HepG2 (cell line): ENCODE measurements at regions of chr1 and their contacts with region 1.

Region 1: DNA sequence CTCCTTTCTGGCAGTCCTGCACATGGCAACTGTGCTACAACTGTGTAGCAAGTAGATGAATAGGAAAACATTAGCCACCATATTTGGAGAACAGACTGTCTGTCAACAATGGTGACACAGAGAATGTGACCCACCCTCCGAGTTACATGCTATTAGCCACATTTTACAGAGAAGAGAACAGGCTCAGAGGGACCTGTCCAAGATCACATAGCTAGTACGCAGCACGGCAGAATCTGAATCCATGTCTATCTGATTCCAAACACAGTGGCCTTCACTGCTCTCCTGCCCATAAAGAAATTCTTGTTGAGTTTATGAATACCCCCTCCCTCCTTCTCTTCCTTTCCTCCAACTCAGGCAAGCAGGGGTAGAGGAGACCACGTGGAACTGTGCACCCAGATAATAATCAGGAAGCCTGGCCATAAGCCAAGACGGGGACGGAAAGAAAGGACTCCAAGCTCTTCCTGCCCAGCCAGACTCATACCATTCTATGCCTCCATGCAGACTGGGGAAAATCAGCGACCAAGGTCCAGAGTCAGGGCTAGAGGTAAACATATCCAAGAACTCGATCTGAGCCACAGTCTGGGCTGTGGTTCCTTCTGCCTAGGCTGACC is 78.8 kb downstream of the TRABD2B start:
- DNase-seq: peak; percentile 91
- ATAC-seq: peak; percentile 74
- H3K4me3 ChIP-seq: peak overlapping the region; percentile 15 to 65 (median 31); a peak in 5 of 6 replicates
- H3K27ac ChIP-seq: peak overlapping the region; percentile 85
- H3K4me1 ChIP-seq: peaks cover 100% of the 10 kb centered on the region
- H3K27me3 ChIP-seq: no peaks in the 10 kb centered on the region
- CTCF ChIP-seq: no peak
- EP300 ChIP-seq: no peak; a peak in 1 of 4 replicates
- POLR2A ChIP-seq: peak; percentile 27 to 49; a peak in 3 of 4 replicates
- RAD21 ChIP-seq: no peak

Region 2: GRCh38 chr1:47785561-47786271 is 132.6 kb before region 1 on chr1:
- CTCF ChIA-PET with region 1: no interaction called
- POLR2A ChIA-PET with region 1: interaction called, 11 read pairs
- in situ Hi-C with region 1: no loop called
- intact Hi-C with region 1: no loop called
- DNase-seq: peak; percentile 41
- ATAC-seq: peak; percentile 86
- H3K4me3 ChIP-seq: peak overlapping the region in 1 of 3 experiments; percentile 30; a peak in 2 of 6 replicates
- H3K27ac ChIP-seq: no peak overlapping the region
- H3K4me1 ChIP-seq: peaks cover 57% of the 10 kb centered on the region
- H3K27me3 ChIP-seq: peaks cover 0 to 1% of the 10 kb centered on the region in 2 experiments; a peak in 1 of 5 replicates
- CTCF ChIP-seq: peak; percentile 84
- EP300 ChIP-seq: no peak
- POLR2A ChIP-seq: no peak
- RAD21 ChIP-seq: peak; percentile 81

Region 3: DNA sequence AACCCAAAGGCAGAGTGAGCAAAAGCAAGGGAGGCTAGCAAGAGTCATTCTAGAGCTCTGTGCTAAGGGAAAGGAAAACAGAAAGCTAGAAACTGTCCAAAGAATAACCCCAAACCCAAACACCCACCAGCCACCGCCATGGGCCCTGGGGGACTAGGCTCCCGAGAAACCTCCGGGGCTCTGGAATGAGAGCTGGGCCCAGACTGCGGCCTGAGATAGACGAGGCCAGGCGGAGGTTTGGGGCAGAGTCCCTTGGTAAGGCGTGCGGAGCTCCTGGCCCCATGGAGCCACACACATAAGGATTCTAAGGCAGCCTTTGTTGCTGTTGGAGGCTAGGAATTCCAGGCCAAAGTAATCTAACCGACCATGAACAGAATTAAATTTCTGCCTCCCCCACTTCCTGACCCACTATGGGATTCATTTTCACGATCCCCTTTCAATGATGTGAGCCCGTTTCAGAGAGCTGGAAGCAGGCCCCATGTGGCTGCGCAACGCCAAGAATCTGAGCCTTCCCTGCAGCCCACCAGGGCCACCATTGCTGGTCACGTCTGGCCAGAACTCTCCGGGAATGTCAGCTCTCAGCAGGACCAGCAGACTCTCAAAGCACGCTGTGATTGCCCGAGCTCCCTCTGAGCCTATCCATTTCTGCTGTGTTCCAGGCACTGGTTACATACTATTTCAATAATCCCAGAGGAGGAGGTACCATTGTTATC is 66.2 kb before region 1 on chr1:
- CTCF ChIA-PET with region 1: no interaction called
- POLR2A ChIA-PET with region 1: interaction called, 13 read pairs
- in situ Hi-C with region 1: no loop called
- intact Hi-C with region 1: no loop called
- DNase-seq: no peak
- ATAC-seq: no peak
- H3K4me3 ChIP-seq: no peak overlapping the region
- H3K27ac ChIP-seq: no peak overlapping the region
- H3K4me1 ChIP-seq: peaks cover 87% of the 10 kb centered on the region
- H3K27me3 ChIP-seq: no peaks in the 10 kb centered on the region
- CTCF ChIP-seq: no peak
- EP300 ChIP-seq: no peak
- POLR2A ChIP-seq: no peak
- RAD21 ChIP-seq: no peak

Region 4: DNA sequence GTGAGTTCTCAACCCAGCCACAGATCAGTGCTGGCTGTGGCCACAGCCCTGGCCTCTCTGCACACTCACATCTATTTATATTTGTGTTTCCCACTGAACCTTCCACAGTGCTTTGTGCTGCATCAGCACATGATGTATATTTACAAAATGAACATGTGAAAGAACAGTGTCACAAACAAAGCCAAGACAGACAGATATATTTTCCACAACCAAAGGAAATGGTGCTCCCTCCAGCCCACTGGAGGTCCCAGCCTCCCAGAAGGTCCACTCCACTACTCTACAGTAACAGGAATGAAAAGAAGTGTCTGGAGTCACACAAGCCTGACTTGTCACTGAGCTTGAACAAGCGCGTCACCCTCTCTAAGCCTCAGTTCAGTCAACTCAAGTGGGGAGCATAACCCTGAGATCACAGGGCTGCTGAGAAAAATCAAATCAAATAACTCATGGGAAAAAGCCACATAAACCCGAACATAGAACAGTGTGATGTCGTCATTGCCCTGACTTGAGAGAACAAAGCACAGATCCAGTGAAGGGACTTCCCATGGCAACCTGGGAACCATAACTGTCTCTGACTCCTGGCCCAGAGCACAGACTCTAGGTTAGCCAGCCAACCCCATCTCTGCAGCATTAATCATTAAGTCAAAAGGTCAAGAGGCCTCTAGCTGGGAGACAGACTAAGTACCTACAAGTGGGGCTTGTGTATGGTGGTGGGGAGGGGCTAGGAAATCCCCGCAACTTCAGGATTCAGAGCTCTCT is 42.4 kb before region 1 on chr1:
- CTCF ChIA-PET with region 1: no interaction called
- POLR2A ChIA-PET with region 1: interaction called, 20 read pairs
- in situ Hi-C with region 1: no loop called
- intact Hi-C with region 1: no loop called
- DNase-seq: peak; percentile 87
- ATAC-seq: peak; percentile 90
- H3K4me3 ChIP-seq: peak overlapping the region in 1 of 3 experiments; percentile 35; a peak in 2 of 6 replicates
- H3K27ac ChIP-seq: peak overlapping the region; percentile 82
- H3K4me1 ChIP-seq: peaks cover 60% of the 10 kb centered on the region
- H3K27me3 ChIP-seq: no peaks in the 10 kb centered on the region
- CTCF ChIP-seq: 0 out of 2 replicates have a peak, but pooled peaks have one; percentile 0
- EP300 ChIP-seq: peak in 1 of 2 experiments; percentile 45; a peak in 1 of 4 replicates
- POLR2A ChIP-seq: peak in 1 of 2 experiments; percentile 42; a peak in 1 of 4 replicates
- RAD21 ChIP-seq: no peak

Region 5: GRCh38 chr1:47934243-47934805 is 16.0 kb after region 1 on chr1:
- CTCF ChIA-PET with region 1: no interaction called
- POLR2A ChIA-PET with region 1: interaction called, 39 read pairs
- in situ Hi-C with region 1: no loop called
- intact Hi-C with region 1: loop called (anchors 2 kb)
- DNase-seq: no peak
- ATAC-seq: peak; percentile 38
- H3K4me3 ChIP-seq: no peak overlapping the region
- H3K27ac ChIP-seq: no peak overlapping the region
- H3K4me1 ChIP-seq: peaks cover 45% of the 10 kb centered on the region
- H3K27me3 ChIP-seq: peaks cover 0 to 12% of the 10 kb centered on the region in 2 experiments; a peak in 2 of 5 replicates
- CTCF ChIP-seq: no peak
- EP300 ChIP-seq: no peak
- POLR2A ChIP-seq: no peak
- RAD21 ChIP-seq: no peak

Region 6: GRCh38 chr1:48003741-48004511 is 85.6 kb after region 1 on chr1:
- CTCF ChIA-PET with region 1: no interaction called
- POLR2A ChIA-PET with region 1: no interaction called
- in situ Hi-C with region 1: no loop called
- intact Hi-C with region 1: no loop called
- DNase-seq: no peak
- ATAC-seq: no peak
- H3K4me3 ChIP-seq: no peak overlapping the region
- H3K27ac ChIP-seq: no peak overlapping the region
- H3K4me1 ChIP-seq: no peaks in the 10 kb centered on the region
- H3K27me3 ChIP-seq: peaks cover 0 to 8% of the 10 kb centered on the region in 2 experiments; a peak in 2 of 5 replicates
- CTCF ChIP-seq: no peak
- EP300 ChIP-seq: no peak
- POLR2A ChIP-seq: no peak
- RAD21 ChIP-seq: no peak